Spleen (tissue), 13 donors: ENCODE measurements at regions of chr19 and their contacts with region 1.

Region 1: GRCh38 chr19:7799640-7800355 is 30.2 kb upstream of the EVI5L start:
- DNase-seq: peak; percentile 85
- H3K4me3 ChIP-seq: peak overlapping the region in 2 of 8 donors; percentile 21 to 49
- H3K27ac ChIP-seq: peak overlapping the region in 3 of 8 donors; percentile 26 to 53 (median 43)
- H3K4me1 ChIP-seq: peaks cover 4 to 19% (median 14%) of the 10 kb centered on the region in 6 donors
- H3K27me3 ChIP-seq: peaks cover 0 to 70% (median 6%) of the 10 kb centered on the region in 7 donors
- CTCF ChIP-seq: peak; percentile 36 to 82 (median 60)
- POLR2A ChIP-seq: no peak

Region 2: GRCh38 chr19:7104747-7105447 is 694.9 kb before region 1 on chr19:
- intact Hi-C with region 1: loop called (anchors 10 kb)
- DNase-seq: no peak
- H3K4me3 ChIP-seq: no peak overlapping the region
- H3K27ac ChIP-seq: no peak overlapping the region
- H3K4me1 ChIP-seq: peaks cover under 1 to 17% (median 9%) of the 10 kb centered on the region in 6 donors
- H3K27me3 ChIP-seq: no peaks in the 10 kb centered on the region
- CTCF ChIP-seq: no peak
- POLR2A ChIP-seq: no peak

Region 3: GRCh38 chr19:7565332-7565731 is 234.5 kb before region 1 on chr19:
- intact Hi-C with region 1: loop called (anchors 5 kb)
- DNase-seq: no peak
- H3K4me3 ChIP-seq: no peak overlapping the region
- H3K27ac ChIP-seq: no peak overlapping the region
- H3K4me1 ChIP-seq: peaks cover 0 to 6% (median 5%) of the 10 kb centered on the region in 6 donors
- H3K27me3 ChIP-seq: no peaks in the 10 kb centered on the region
- CTCF ChIP-seq: no peak
- POLR2A ChIP-seq: no peak

Region 4: GRCh38 chr19:7680606-7681339 is 119.0 kb before region 1 on chr19 and contains the start of gene TRAPPC5:
- intact Hi-C with region 1: loop called (anchors 5 kb)
- DNase-seq: peak; percentile 98
- H3K4me3 ChIP-seq: peak within 1 kb of the TSS; percentile 78 to 100 (median 94)
- H3K27ac ChIP-seq: peak within 1 kb of the TSS; percentile 78 to 98 (median 96)
- H3K4me1 ChIP-seq: peaks cover 6 to 80% (median 42%) of the 10 kb centered on the region in 6 donors
- H3K27me3 ChIP-seq: peaks cover 0 to 42% (median 14%) of the 10 kb centered on the region in 7 donors
- CTCF ChIP-seq: peak; percentile 37 to 100 (median 100)
- POLR2A ChIP-seq: peak in 2 of 3 donors; percentile 47 to 67
- total RNA-seq, gene TRAPPC5: 47.2 to 88.5 (median 77.4) TPM